B cell (primary cell): ENCODE measurements at regions of chr2 and their contacts with region 1.

Region 1: DNA sequence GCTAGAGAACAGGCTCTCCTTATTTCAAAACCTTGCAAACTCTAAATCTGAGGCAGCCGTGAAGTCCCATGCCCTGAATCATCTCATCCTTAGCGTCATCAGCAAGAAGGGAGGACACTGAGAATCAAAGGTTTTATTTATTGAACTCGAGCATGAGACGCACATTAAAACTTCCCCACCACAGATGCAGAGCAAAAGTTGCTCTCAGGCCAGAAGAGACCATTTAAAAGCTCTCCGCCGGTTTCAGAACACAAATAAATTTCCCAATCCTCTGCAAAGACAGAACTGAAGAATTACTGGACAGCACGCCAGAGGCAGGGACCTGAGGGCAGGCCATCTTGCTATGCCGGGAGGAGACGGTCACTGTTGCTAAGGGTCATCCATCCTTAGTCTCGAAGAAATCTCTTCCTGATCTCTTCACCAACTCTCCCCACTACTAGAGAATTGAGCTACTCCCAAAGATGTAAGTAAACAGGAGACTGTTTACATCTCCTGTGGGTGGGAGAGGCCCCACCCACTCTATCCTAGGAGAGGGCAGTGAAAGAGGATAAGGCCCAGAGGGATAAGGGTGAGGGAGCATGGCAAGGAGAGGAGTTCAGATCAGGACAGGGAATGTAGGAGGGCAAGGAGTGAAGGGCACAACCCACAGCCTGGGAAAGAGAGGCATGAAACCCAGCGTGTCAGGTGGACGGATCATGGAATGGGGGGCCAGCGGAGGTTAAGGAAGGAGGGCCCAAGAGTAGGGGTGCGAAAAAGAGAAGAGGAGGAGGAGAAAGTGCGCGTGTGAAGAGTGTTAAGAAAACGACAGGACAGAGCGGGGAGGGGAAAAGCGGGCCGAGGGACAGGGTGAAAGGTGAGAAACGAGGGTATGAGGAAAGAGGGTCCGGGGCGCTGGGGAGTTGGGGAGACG is 1.1 kb downstream of the AMMECR1L start:
- DNase-seq: peak; percentile 29
- ATAC-seq: no peak
- H3K4me3 ChIP-seq: peak overlapping the region in 4 of 5 experiments; percentile 21 to 55 (median 45)
- H3K4me3 Mint-ChIP-seq: peak overlapping the region; percentile 91
- H3K27ac ChIP-seq: peak overlapping the region in 1 of 2 donors; percentile 45
- H3K27ac Mint-ChIP-seq: peak overlapping the region; percentile 84
- H3K4me1 ChIP-seq: peaks cover 15 to 21% of the 10 kb centered on the region in 2 donors
- H3K4me1 Mint-ChIP-seq: peaks cover 33% of the 10 kb centered on the region
- H3K27me3 ChIP-seq: no peaks in the 10 kb centered on the region
- H3K27me3 Mint-ChIP-seq: no peaks in the 10 kb centered on the region
- CTCF ChIP-seq: no peak

Region 2: GRCh38 chr2:126345691-126346090 is 1539.0 kb before region 1 on chr2:
- CTCF ChIA-PET with region 1: no interaction called
- POLR2A ChIA-PET with region 1: no interaction called
- intact Hi-C with region 1: no loop called
- DNase-seq: no peak
- ATAC-seq: no peak
- H3K4me3 ChIP-seq: no peak overlapping the region
- H3K4me3 Mint-ChIP-seq: no peak overlapping the region
- H3K27ac ChIP-seq: no peak overlapping the region
- H3K27ac Mint-ChIP-seq: no peak overlapping the region
- H3K4me1 ChIP-seq: no peaks in the 10 kb centered on the region
- H3K4me1 Mint-ChIP-seq: no peaks in the 10 kb centered on the region
- H3K27me3 ChIP-seq: no peaks in the 10 kb centered on the region
- H3K27me3 Mint-ChIP-seq: no peaks in the 10 kb centered on the region
- CTCF ChIP-seq: no peak

Region 3: DNA sequence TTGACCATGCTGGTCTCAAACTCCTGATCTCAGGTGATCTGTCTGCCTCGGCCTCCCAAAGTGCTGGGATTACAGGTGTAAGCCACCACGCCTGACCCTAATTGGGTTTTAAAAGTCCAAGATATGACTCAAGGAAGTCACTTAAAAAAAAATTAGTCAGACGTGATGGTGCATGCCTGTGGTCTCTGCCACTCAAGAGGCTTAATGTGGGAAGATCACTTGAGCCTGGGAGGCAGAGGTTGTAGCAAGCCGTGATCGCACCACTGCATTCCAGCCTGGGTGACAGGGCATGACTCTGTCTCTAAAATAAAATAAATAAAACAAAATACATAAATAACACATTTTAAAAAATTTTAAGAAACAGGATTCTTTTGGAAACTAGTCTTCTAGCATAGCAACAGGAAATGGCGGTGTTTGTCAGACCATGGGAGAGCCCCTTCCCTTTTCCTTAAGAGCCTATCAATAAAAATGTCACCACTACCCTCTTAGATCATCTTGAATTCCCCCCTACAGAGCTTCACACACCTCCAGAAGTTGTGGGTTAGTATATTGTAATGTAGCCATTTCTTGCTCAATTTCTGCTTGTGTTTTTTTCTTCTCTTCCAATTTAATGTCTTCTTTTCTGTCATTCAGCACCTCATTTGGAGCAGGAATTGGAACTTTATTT is 163.2 kb before region 1 on chr2:
- CTCF ChIA-PET with region 1: no interaction called
- POLR2A ChIA-PET with region 1: no interaction called
- intact Hi-C with region 1: no loop called
- DNase-seq: no peak
- ATAC-seq: no peak
- H3K4me3 ChIP-seq: no peak overlapping the region
- H3K4me3 Mint-ChIP-seq: no peak overlapping the region
- H3K27ac ChIP-seq: no peak overlapping the region
- H3K27ac Mint-ChIP-seq: no peak overlapping the region
- H3K4me1 ChIP-seq: no peaks in the 10 kb centered on the region
- H3K4me1 Mint-ChIP-seq: no peaks in the 10 kb centered on the region
- H3K27me3 ChIP-seq: no peaks in the 10 kb centered on the region
- H3K27me3 Mint-ChIP-seq: no peaks in the 10 kb centered on the region
- CTCF ChIP-seq: no peak

Region 4: DNA sequence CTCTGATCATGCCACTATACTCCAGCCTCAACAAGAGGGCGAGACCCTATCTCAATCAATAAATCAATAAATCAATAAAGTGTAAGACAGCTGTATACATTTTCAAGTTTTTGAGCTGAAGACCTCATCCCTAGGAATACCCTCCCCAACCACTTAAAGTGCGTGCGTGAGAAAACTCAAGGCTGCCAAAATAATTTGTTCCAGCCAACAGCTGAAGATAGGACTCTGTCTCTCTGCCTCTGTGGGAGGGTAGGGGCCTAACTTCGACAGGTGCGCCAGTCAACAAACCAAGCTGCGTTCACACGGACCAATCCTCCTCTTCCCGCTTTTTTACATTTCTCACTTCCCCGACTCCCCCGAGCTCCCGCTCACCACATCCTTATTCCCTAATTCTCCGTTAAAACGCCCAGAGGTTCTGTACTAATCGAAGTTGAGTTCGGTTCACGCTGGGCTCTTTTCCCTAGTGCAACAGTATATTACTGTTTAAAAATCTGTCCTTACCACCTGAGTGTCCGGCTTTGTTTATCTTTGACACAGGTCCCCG is 27.4 kb before region 1 on chr2:
- CTCF ChIA-PET with region 1: interaction called, 3 read pairs
- POLR2A ChIA-PET with region 1: interaction called, 15 read pairs
- intact Hi-C with region 1: loop called (anchors 2 kb)
- DNase-seq: no peak
- ATAC-seq: no peak
- H3K4me3 ChIP-seq: peak overlapping the region; percentile 68 to 87 (median 80)
- H3K4me3 Mint-ChIP-seq: peak overlapping the region; percentile 88
- H3K27ac ChIP-seq: peak overlapping the region; percentile 41 to 85
- H3K27ac Mint-ChIP-seq: peak overlapping the region; percentile 57
- H3K4me1 ChIP-seq: peaks cover 16 to 36% of the 10 kb centered on the region in 2 donors
- H3K4me1 Mint-ChIP-seq: peaks cover 46% of the 10 kb centered on the region
- H3K27me3 ChIP-seq: no peaks in the 10 kb centered on the region
- H3K27me3 Mint-ChIP-seq: no peaks in the 10 kb centered on the region
- CTCF ChIP-seq: no peak